ENCODE measurements at regions of chr13 and their contacts with region 1.

Region 1: DNA sequence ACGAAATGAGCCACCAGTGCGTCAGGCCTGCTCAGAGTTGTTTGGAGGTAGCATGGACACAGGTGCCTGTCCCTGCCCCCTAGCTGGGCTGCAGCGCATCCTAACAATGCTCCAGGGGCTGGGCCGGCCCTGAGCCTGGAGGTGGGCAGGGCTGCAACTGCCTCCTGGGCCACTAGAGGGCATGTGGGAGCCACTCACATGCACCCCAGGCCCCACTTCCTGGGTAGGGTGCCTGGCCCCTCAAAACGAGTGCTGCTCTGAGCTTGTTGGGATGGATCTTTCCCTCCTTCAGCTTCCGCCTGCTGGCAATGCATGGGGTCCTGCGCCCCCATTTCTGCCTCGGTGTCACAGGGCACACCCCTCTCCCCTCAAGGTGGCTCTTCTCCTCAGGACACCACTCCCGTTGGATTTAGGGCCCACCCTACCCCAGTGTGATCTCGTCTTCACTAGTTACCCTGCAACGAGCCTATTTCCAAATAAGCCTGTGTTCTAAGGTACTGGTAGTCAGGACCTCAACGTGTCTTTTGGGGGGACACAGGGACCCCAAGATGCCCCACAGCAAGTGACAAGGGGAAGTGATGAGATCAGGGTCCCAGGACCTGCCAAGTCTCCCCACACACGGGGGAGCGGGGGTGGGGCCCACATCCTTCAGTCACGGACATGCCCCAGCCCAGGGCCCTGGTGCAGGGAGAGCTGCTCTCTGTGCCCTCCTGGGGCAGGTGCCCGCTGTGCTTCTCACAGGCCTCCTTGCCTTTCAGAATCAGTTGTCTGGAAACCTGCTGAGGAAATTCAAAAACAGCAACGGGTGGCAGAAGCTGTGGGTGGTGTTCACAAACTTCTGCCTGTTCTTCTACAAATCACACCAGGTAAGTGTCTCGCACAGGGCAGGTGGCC is 131.3 kb downstream of the STK24 start:
- DNase-seq: peak; percentile 74
- H3K4me3 ChIP-seq: no peak overlapping the region
- H3K27ac ChIP-seq: peak overlapping the region; percentile 23
- H3K4me1 ChIP-seq: peaks cover 6% of the 10 kb centered on the region
- H3K27me3 ChIP-seq: no peaks in the 10 kb centered on the region
- CTCF ChIP-seq: peak; percentile 94

Region 2: GRCh38 chr13:98653463-98653985 is 207.9 kb after region 1 on chr13:
- CTCF ChIA-PET with region 1: interaction called, 18 read pairs
- POLR2A ChIA-PET with region 1: no interaction called
- intact Hi-C with region 1: loop called (anchors 2 kb)
- DNase-seq: peak; percentile 76
- H3K4me3 ChIP-seq: no peak overlapping the region
- H3K27ac ChIP-seq: no peak overlapping the region
- H3K4me1 ChIP-seq: no peaks in the 10 kb centered on the region
- H3K27me3 ChIP-seq: no peaks in the 10 kb centered on the region
- CTCF ChIP-seq: peak; percentile 92

Measured in A673 (cell line).